ENCODE measurements at regions of chr7 and their contacts with region 1.

Region 1: GRCh38 chr7:29723599-29723998 is 82.7 kb upstream of the WIPF3 start:
- DNase-seq: peak; percentile 32
- H3K4me3 ChIP-seq: no peak overlapping the region
- H3K27ac ChIP-seq: peak overlapping the region; percentile 34
- H3K4me1 ChIP-seq: peaks cover 17% of the 10 kb centered on the region
- H3K27me3 ChIP-seq: no peaks in the 10 kb centered on the region
- CTCF ChIP-seq: no peak
- POLR2A ChIP-seq: no peak

Region 2: GRCh38 chr7:29684787-29685650 is 38.6 kb before region 1 on chr7:
- CTCF ChIA-PET with region 1: no interaction called
- POLR2A ChIA-PET with region 1: no interaction called
- dilution Hi-C with region 1: no loop called
- intact Hi-C with region 1: loop called (anchors 5 kb)
- DNase-seq: peak; percentile 77
- H3K4me3 ChIP-seq: peak overlapping the region; percentile 52 to 68 (median 56)
- H3K27ac ChIP-seq: peak overlapping the region; percentile 58
- H3K4me1 ChIP-seq: no peaks in the 10 kb centered on the region
- H3K27me3 ChIP-seq: no peaks in the 10 kb centered on the region
- CTCF ChIP-seq: no peak
- POLR2A ChIP-seq: no peak

Measured in endothelial cell of umbilical vein (primary cell).